ENCODE measurements at regions of chr12 and their contacts with region 1.

Region 1: GRCh38 chr12:868722-869121 is 80.8 kb downstream of the RAD52 start:
- DNase-seq: no peak
- ATAC-seq: no peak

Region 2: DNA sequence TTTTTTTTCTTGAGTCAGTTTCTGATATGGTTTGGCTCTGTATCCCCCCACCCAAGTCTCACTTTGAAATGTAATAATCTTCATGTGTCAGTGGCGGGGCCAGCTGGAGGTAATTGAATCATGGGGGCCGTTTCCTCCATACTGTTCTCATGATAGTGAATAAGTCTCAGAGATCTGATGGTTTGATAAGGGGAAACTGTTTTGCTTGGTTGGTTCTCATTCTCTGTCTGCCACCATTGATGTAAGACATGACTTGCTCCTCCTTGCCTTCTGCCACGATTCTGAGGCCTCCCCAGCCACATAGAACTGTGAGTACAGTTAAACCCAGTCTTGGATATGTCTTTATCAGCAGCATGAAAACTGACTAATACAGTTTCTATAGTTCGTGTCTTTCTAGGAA is 73.4 kb before region 1 on chr12:
- intact Hi-C with region 1: no loop called
- DNase-seq: no peak
- ATAC-seq: no peak

Region 3: GRCh38 chr12:904010-904414 is 35.3 kb after region 1 on chr12:
- intact Hi-C with region 1: loop called (anchors 5 kb)
- DNase-seq: no peak
- ATAC-seq: no peak

Region 4: DNA sequence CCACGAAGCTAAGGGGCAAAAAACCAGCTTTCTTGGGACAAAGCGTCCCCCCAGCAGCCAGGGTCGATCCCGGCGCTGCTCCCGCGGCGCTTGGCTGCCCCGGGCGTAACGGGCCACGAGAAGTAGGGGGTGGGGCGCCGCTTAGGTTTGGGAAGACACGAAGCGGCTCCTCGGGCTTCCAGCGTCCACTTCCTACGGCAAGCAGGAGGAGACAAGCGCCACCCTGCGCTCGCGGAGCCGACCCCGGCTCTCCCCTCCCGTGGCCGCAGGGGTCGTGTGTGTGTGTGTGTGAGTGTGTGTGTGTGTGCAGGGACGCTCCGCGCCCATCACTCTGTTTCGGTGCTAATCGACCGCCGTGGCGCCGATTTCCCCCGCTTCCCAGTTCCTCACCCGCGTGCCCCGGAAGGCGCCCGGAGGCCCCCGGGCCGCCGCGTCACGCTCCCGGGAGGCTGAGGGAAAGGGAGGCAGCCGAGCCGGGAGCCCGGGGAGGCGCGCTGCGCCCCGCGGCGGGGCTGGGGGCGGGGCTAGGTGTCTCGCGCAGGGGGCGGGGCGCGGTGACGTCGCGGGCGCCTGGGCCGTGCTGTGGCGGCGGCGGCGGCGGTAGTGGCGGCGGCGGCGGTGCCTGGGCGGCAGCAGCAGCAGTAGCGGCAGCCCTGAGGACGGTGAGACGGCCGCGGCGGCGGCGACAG is 122.1 kb after region 1 on chr12 and contains the start of gene ERC1:
- intact Hi-C with region 1: no loop called
- DNase-seq: peak; percentile 94
- ATAC-seq: peak; percentile 96
- total RNA-seq, gene ERC1: 46.6 TPM

Region 5: GRCh38 chr12:2137711-2138693 is 1269.3 kb after region 1 on chr12:
- intact Hi-C with region 1: no loop called
- DNase-seq: no peak
- ATAC-seq: peak; percentile 45